ENCODE measurements at regions of chr5 and their contacts with region 1.

Region 1: GRCh38 chr5:155485386-155485785 is 471.8 kb downstream of the KIF4B start:
- DNase-seq: no peak

Region 2: DNA sequence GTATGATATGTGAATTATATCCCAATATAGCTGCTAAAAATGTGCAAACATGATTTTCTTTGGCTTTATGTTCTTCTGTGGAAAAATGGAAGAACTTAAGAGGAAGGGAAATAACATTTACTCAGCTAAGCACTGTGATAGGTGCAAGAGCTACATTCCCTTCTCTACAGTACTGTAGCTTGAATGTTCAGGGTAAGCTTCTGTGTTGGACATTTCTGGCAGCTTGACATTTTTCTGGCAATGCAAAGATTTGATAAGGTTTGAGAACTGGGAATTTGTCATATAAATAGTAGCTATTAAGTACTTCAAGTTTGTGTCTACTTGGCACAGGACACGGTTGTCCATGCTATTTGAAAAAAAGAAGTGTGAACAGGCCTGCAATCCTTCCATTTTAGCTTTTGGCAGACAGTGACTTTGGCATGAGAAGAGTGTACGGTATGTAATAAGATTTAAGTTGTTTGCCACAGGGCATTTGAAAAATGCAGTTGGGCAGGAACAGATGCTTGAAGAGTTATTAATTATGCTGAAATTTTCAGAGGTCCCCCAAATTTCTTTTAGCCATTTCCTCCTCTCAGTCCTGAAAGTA is 394.2 kb before region 1 on chr5:
- intact Hi-C with region 1: loop called (anchors 5 kb)
- DNase-seq: no peak